CD8-positive, alpha-beta T cell (primary cell): ENCODE measurements at regions of chr10 and their contacts with region 1.

Region 1: GRCh38 chr10:35635576-35635975 is 6.5 kb downstream of the FZD8 start:
- DNase-seq: peak in 5 of 9 experiments; percentile 27 to 71 (median 30)
- ATAC-seq: peak; percentile 62
- H3K4me3 ChIP-seq: no peak overlapping the region
- H3K4me3 Mint-ChIP-seq: no peak overlapping the region
- H3K27ac ChIP-seq: no peak overlapping the region
- H3K27ac Mint-ChIP-seq: no peak overlapping the region
- H3K4me1 ChIP-seq: peaks cover 5% of the 10 kb centered on the region
- H3K4me1 Mint-ChIP-seq: peaks cover 18% of the 10 kb centered on the region
- H3K27me3 ChIP-seq: peaks cover 0 to 9% of the 10 kb centered on the region in 2 experiments
- H3K27me3 Mint-ChIP-seq: peaks cover 51% of the 10 kb centered on the region
- CTCF ChIP-seq: peak; percentile 79

Region 2: GRCh38 chr10:35480142-35480541 is 155.4 kb before region 1 on chr10:
- CTCF ChIA-PET with region 1: no interaction called
- POLR2A ChIA-PET with region 1: no interaction called
- intact Hi-C with region 1: no loop called
- DNase-seq: no peak
- ATAC-seq: no peak
- H3K4me3 ChIP-seq: no peak overlapping the region
- H3K4me3 Mint-ChIP-seq: no peak overlapping the region
- H3K27ac ChIP-seq: no peak overlapping the region
- H3K27ac Mint-ChIP-seq: no peak overlapping the region
- H3K4me1 ChIP-seq: no peaks in the 10 kb centered on the region
- H3K4me1 Mint-ChIP-seq: peaks cover 28% of the 10 kb centered on the region
- H3K27me3 ChIP-seq: no peaks in the 10 kb centered on the region
- H3K27me3 Mint-ChIP-seq: no peaks in the 10 kb centered on the region
- CTCF ChIP-seq: no peak

Region 3: GRCh38 chr10:35781643-35782035 is 146.1 kb after region 1 on chr10:
- CTCF ChIA-PET with region 1: interaction called, 4 read pairs
- POLR2A ChIA-PET with region 1: no interaction called
- intact Hi-C with region 1: loop called in 1 of 2 experiments (anchors 5 kb)
- DNase-seq: peak in 1 of 9 experiments; percentile 3
- ATAC-seq: no peak
- H3K4me3 ChIP-seq: no peak overlapping the region
- H3K4me3 Mint-ChIP-seq: no peak overlapping the region
- H3K27ac ChIP-seq: no peak overlapping the region
- H3K27ac Mint-ChIP-seq: no peak overlapping the region
- H3K4me1 ChIP-seq: no peaks in the 10 kb centered on the region
- H3K4me1 Mint-ChIP-seq: no peaks in the 10 kb centered on the region
- H3K27me3 ChIP-seq: no peaks in the 10 kb centered on the region
- H3K27me3 Mint-ChIP-seq: peaks cover 2% of the 10 kb centered on the region
- CTCF ChIP-seq: no peak

Region 4: GRCh38 chr10:36880898-36881297 is 1245.3 kb after region 1 on chr10:
- CTCF ChIA-PET with region 1: no interaction called
- POLR2A ChIA-PET with region 1: no interaction called
- intact Hi-C with region 1: loop called (anchors 5 kb)
- DNase-seq: peak in 1 of 9 experiments; percentile 3
- ATAC-seq: no peak
- H3K4me3 ChIP-seq: no peak overlapping the region
- H3K4me3 Mint-ChIP-seq: no peak overlapping the region
- H3K27ac ChIP-seq: no peak overlapping the region
- H3K27ac Mint-ChIP-seq: no peak overlapping the region
- H3K4me1 ChIP-seq: no peaks in the 10 kb centered on the region
- H3K4me1 Mint-ChIP-seq: no peaks in the 10 kb centered on the region
- H3K27me3 ChIP-seq: no peaks in the 10 kb centered on the region
- H3K27me3 Mint-ChIP-seq: no peaks in the 10 kb centered on the region
- CTCF ChIP-seq: no peak

Region 5: GRCh38 chr10:36888929-36889573 is 1253.5 kb after region 1 on chr10:
- CTCF ChIA-PET with region 1: no interaction called
- POLR2A ChIA-PET with region 1: no interaction called
- intact Hi-C with region 1: loop called (anchors 5 kb)
- DNase-seq: peak in 5 of 9 experiments; percentile 12 to 29 (median 17)
- ATAC-seq: no peak
- H3K4me3 ChIP-seq: no peak overlapping the region
- H3K4me3 Mint-ChIP-seq: no peak overlapping the region
- H3K27ac ChIP-seq: no peak overlapping the region
- H3K27ac Mint-ChIP-seq: no peak overlapping the region
- H3K4me1 ChIP-seq: no peaks in the 10 kb centered on the region
- H3K4me1 Mint-ChIP-seq: no peaks in the 10 kb centered on the region
- H3K27me3 ChIP-seq: no peaks in the 10 kb centered on the region
- H3K27me3 Mint-ChIP-seq: no peaks in the 10 kb centered on the region
- CTCF ChIP-seq: no peak

Region 6: DNA sequence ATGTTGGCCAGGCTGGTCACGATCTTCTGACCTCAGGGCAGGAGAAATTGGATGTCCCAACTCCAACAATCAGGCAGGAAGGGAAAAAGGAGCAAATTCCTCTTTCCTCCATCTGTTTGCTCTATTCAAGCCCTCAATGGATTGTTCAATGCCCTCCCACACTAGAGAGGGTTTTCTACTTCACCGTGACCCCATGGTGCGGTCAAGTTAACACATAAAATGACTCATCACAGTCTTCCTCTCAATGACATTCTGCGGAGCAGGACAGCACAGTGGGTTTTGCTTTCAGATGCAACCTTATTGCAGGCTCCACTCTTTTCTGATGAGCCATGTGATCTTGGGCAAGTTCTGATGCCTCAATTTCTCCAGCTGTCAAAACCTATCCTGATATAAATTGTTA is 1854.7 kb after region 1 on chr10:
- CTCF ChIA-PET with region 1: no interaction called
- POLR2A ChIA-PET with region 1: no interaction called
- intact Hi-C with region 1: loop called in 1 of 2 experiments (anchors 5 kb)
- DNase-seq: no peak
- ATAC-seq: no peak
- H3K4me3 ChIP-seq: no peak overlapping the region
- H3K4me3 Mint-ChIP-seq: no peak overlapping the region
- H3K27ac ChIP-seq: no peak overlapping the region
- H3K27ac Mint-ChIP-seq: no peak overlapping the region
- H3K4me1 ChIP-seq: no peaks in the 10 kb centered on the region
- H3K4me1 Mint-ChIP-seq: no peaks in the 10 kb centered on the region
- H3K27me3 ChIP-seq: no peaks in the 10 kb centered on the region
- H3K27me3 Mint-ChIP-seq: no peaks in the 10 kb centered on the region
- CTCF ChIP-seq: no peak